ENCODE measurements at regions of chr3 and their contacts with region 1.

Region 1: DNA sequence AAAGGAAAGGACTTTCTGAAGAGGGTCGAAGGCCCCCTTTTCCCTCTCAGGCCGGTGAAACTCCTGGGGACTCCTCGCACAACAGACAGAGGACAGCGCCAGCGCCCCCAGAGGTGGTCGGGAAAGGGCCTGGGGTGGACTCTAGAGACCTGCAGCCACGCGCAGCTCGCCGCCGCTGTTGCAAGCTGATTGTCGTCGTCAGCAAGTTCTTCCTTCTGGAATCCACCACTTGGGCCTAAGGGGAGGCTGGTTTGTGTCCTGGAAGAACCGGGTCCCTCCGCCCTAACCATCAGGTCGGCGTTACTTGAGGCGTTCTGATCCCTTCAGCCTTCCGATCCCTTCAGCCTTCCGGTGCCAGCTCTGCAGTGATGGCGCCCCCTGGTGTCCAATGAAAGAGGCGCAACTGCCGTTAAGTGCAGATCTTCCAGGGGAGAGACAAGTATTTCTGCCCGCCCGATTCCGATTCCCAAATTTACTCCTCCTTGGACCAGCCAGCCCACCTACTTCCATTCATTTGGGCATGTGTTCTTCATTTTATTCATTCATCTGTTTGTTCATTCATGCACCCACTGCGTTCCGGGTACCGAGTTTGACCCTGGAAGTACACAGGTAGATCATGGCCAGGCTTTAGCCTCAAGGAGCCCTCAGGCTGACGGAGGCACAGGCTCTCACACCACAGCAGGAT is 77.2 kb upstream of the SLC6A11 start:
- DNase-seq: peak; percentile 43
- ATAC-seq: peak; percentile 94
- H3K4me3 ChIP-seq: peak overlapping the region in 1 of 2 experiments; percentile 4; a peak in 1 of 4 replicates
- H3K27ac ChIP-seq: no peak overlapping the region
- H3K4me1 ChIP-seq: peaks cover 0 to 4% of the 10 kb centered on the region in 2 experiments; a peak in 1 of 4 replicates
- H3K27me3 ChIP-seq: peaks cover 12% of the 10 kb centered on the region; the same call in 1 of the 2 replicates
- CTCF ChIP-seq: peak; percentile 86 to 90 (median 90)
- POLR2A ChIP-seq: no peak
- RAD21 ChIP-seq: peak; percentile 84

Region 2: GRCh38 chr3:8970971-8971589 is 1767.8 kb before region 1 on chr3:
- CTCF ChIA-PET with region 1: no interaction called
- POLR2A ChIA-PET with region 1: no interaction called
- RAD21 ChIA-PET with region 1: no interaction called
- intact Hi-C with region 1: loop called (anchors 5 kb)
- DNase-seq: peak; percentile 45
- ATAC-seq: peak; percentile 78
- H3K4me3 ChIP-seq: no peak overlapping the region
- H3K27ac ChIP-seq: no peak overlapping the region
- H3K4me1 ChIP-seq: peaks cover 0 to 4% of the 10 kb centered on the region in 2 experiments; a peak in 1 of 4 replicates
- H3K27me3 ChIP-seq: no peaks in the 10 kb centered on the region; the same call in 1 of the 2 replicates
- CTCF ChIP-seq: peak; percentile 89 to 98 (median 95)
- POLR2A ChIP-seq: no peak
- RAD21 ChIP-seq: peak; percentile 98

Region 3: DNA sequence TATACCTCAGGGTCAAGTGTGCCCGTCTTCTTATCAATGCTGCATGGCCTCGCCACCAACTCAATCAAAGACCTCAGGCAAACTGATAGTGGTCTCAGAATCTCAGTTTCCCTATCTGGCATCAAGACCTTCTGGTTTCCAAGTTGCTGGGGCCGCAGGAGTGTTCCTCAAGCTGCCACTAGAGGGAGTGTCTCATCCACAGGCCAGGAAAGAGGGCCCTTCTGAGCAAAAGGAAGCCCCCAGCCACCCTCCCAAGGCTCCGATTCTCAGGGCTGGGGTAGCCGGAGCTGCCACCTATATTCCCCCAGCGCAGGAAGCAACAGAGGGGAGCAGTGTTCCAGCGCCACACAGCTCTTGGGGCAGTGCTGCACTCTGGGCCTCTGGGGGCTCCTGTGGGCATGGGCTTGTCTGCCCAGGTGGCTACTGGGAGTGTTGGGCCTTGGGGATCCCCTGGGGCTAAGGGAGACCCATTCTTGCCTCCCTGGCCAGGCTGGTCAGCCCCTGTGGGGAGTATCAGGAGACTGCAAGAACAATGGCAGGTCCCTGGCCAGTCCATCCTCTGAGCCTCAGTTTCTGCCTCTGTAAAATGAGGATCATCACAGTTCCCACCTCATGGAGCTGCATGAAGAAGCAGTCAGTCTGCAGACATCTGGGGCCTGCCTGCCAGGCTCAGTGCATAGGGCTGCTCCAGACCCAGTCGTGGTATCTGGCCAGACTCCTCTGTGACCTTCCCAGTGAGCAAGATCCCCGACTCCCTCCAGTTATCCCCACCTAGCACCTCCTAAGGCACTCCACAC is 394.5 kb before region 1 on chr3:
- CTCF ChIA-PET with region 1: interaction called, 5 read pairs
- POLR2A ChIA-PET with region 1: no interaction called
- RAD21 ChIA-PET with region 1: no interaction called
- intact Hi-C with region 1: loop called (anchors 1 kb)
- DNase-seq: no peak
- ATAC-seq: peak; percentile 76
- H3K4me3 ChIP-seq: no peak overlapping the region
- H3K27ac ChIP-seq: no peak overlapping the region
- H3K4me1 ChIP-seq: no peaks in the 10 kb centered on the region
- H3K27me3 ChIP-seq: no peaks in the 10 kb centered on the region
- CTCF ChIP-seq: peak; percentile 80 to 97 (median 96); a peak in 5 of 6 replicates
- POLR2A ChIP-seq: no peak
- RAD21 ChIP-seq: peak; percentile 91

Region 4: DNA sequence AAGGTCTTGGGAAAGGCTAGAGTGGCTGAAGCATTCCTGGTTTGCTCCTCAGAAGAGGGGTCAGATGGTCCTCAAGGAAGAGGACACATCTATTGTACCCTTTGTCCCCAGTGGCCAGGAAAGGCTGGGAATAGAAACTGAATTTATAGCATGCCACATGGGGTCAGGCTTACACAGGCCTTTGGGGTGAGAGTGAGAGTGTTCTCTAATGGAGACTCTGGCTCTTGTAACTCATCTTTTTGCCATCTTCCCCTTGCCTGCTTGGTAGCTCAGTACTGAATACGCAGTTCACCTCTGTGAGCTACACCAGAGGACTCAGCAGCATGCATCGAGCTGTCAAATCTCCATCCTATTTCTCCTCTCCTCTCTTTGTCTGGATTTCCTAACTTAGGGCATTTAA is 321.0 kb before region 1 on chr3:
- CTCF ChIA-PET with region 1: interaction called, 26 read pairs
- POLR2A ChIA-PET with region 1: no interaction called
- RAD21 ChIA-PET with region 1: interaction called in 1 of 2 experiments, 3 read pairs
- intact Hi-C with region 1: loop called (anchors 1 kb)
- DNase-seq: peak; percentile 19
- ATAC-seq: peak; percentile 76
- H3K4me3 ChIP-seq: no peak overlapping the region
- H3K27ac ChIP-seq: no peak overlapping the region
- H3K4me1 ChIP-seq: no peaks in the 10 kb centered on the region
- H3K27me3 ChIP-seq: peaks cover 3% of the 10 kb centered on the region; the same call in 1 of the 2 replicates
- CTCF ChIP-seq: peak; percentile 28 to 80 (median 47); a peak in 5 of 6 replicates
- POLR2A ChIP-seq: no peak
- RAD21 ChIP-seq: peak; percentile 88

Region 5: GRCh38 chr3:10666621-10667020 is 72.2 kb before region 1 on chr3:
- CTCF ChIA-PET with region 1: no interaction called
- POLR2A ChIA-PET with region 1: no interaction called
- RAD21 ChIA-PET with region 1: no interaction called
- intact Hi-C with region 1: no loop called
- DNase-seq: no peak
- ATAC-seq: peak; percentile 83
- H3K4me3 ChIP-seq: no peak overlapping the region
- H3K27ac ChIP-seq: no peak overlapping the region
- H3K4me1 ChIP-seq: peaks cover 0 to 8% of the 10 kb centered on the region in 2 experiments; a peak in 2 of 4 replicates
- H3K27me3 ChIP-seq: peaks cover 29% of the 10 kb centered on the region
- CTCF ChIP-seq: no peak
- POLR2A ChIP-seq: no peak
- RAD21 ChIP-seq: no peak

Measured in HCT116 (cell line).